ENCODE measurements at regions of chr13 and their contacts with region 1.

Region 1: DNA sequence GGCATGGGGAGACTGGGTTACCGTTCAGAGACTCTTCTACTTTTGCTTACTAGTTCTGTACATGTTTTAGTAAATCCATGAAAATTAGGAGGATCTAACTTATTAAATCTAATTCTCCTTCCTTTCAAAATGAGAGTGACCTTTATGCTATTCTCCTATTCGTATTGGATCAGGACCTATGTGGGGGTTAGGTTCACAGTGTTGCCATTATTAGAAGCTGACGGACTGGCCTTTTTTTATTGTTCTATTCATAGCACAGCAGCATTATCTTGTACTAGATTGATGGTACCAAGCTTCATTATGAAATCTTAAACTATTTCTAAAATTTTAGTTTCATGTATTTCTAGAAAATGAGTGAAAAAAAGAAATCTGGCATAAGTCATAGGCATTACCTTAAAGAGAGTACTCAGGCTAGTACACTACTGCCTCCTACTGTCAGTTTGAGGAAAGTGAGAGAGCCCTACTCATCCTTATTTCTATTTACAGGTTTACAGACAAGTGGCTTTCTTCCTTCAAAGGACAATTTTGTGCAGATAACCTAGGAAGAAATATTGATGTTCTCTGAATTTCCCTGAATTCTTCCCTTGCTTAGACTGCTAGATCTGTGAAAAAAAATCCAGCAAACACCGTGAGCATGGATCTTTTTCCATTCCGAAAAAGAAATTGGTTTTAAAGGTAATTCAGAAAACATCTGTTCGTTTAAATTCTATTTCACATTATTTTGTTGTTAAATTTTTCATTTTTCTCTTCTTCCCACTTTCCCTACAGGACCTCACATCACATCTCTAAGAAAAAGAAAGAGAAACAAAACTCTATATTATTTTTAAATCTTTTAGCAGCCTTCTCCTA is 485.5 kb downstream of the DIAPH3 start:
- DNase-seq: no peak
- H3K4me3 ChIP-seq: no peak overlapping the region
- H3K27ac ChIP-seq: no peak overlapping the region
- H3K4me1 ChIP-seq: no peaks in the 10 kb centered on the region
- H3K27me3 ChIP-seq: no peaks in the 10 kb centered on the region
- CTCF ChIP-seq: peak; percentile 55 to 78 (median 67)
- EP300 ChIP-seq: no peak
- POLR2A ChIP-seq: no peak

Region 2: GRCh38 chr13:59391696-59392095 is 286.5 kb before region 1 on chr13:
- in situ Hi-C with region 1: loop called (anchors 5 to 25 kb)
- intact Hi-C with region 1: loop called (anchors 5 kb)
- DNase-seq: peak; percentile 49
- H3K4me3 ChIP-seq: no peak overlapping the region
- H3K27ac ChIP-seq: no peak overlapping the region
- H3K4me1 ChIP-seq: peaks cover 0 to 5% (median 0%) of the 10 kb centered on the region in 4 donors
- H3K27me3 ChIP-seq: no peaks in the 10 kb centered on the region
- CTCF ChIP-seq: peak; percentile 63 to 80 (median 71)
- EP300 ChIP-seq: no peak
- POLR2A ChIP-seq: no peak

Region 3: GRCh38 chr13:59641817-59642216 is 36.4 kb before region 1 on chr13:
- in situ Hi-C with region 1: no loop called
- intact Hi-C with region 1: no loop called
- DNase-seq: no peak
- H3K4me3 ChIP-seq: no peak overlapping the region
- H3K27ac ChIP-seq: no peak overlapping the region
- H3K4me1 ChIP-seq: no peaks in the 10 kb centered on the region
- H3K27me3 ChIP-seq: no peaks in the 10 kb centered on the region
- CTCF ChIP-seq: no peak
- EP300 ChIP-seq: no peak
- POLR2A ChIP-seq: no peak

Region 4: GRCh38 chr13:59906413-59907049 is 228.3 kb after region 1 on chr13:
- in situ Hi-C with region 1: loop called in 2 of 4 experiments (anchors 10 to 25 kb)
- intact Hi-C with region 1: no loop called
- DNase-seq: no peak
- H3K4me3 ChIP-seq: no peak overlapping the region
- H3K27ac ChIP-seq: no peak overlapping the region
- H3K4me1 ChIP-seq: no peaks in the 10 kb centered on the region
- H3K27me3 ChIP-seq: no peaks in the 10 kb centered on the region
- CTCF ChIP-seq: peak; percentile 42 to 51 (median 47)
- EP300 ChIP-seq: no peak
- POLR2A ChIP-seq: no peak

Region 5: DNA sequence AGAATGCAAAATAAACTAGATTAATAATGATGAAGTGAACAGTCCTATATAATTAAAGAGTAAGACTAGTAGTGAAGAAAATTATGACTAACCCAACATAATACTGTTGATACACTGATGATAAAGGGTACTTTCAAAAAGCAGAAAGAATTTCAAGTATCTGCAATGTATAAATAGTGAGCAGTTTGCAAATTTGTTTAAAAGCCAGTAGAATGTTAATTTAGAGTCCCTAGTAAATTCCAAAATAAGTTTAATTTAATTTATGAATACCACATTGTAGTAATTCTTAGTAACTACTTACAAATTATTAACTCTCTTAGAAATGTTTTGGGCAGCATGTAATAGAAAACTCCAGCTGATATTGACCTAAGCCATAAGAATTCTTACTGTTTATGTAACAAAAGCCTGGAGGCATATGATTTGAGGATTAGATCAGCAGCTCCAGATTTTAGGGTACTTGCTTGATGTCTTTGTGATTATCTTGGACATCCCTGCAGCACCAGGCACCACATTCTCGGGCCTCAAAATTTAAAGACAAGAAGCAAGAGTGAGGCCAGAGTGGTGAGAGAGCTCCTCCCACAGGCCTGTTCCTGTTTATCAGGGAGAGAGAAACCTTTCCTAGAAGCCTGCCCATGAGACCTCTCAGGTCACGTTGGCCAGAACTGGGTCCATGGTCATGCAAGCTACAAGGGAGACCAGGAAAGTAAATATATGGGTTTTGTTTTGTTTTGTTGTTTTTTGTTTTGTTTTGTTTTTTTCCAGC is 651.2 kb after region 1 on chr13:
- in situ Hi-C with region 1: loop called in 2 of 4 experiments (anchors 10 to 25 kb)
- intact Hi-C with region 1: no loop called
- DNase-seq: peak; percentile 48
- H3K4me3 ChIP-seq: no peak overlapping the region
- H3K27ac ChIP-seq: no peak overlapping the region
- H3K4me1 ChIP-seq: peaks cover 0 to 17% (median 6%) of the 10 kb centered on the region in 4 donors
- H3K27me3 ChIP-seq: no peaks in the 10 kb centered on the region
- CTCF ChIP-seq: peak in 3 of 5 experiments; percentile 18 to 32 (median 22)
- EP300 ChIP-seq: no peak
- POLR2A ChIP-seq: no peak

Region 6: GRCh38 chr13:60335531-60335930 is 657.3 kb after region 1 on chr13:
- in situ Hi-C with region 1: loop called in 2 of 4 experiments (anchors 10 to 25 kb)
- intact Hi-C with region 1: no loop called
- DNase-seq: no peak
- H3K4me3 ChIP-seq: no peak overlapping the region
- H3K27ac ChIP-seq: no peak overlapping the region
- H3K4me1 ChIP-seq: peaks cover 0 to 11% (median 0%) of the 10 kb centered on the region in 4 donors
- H3K27me3 ChIP-seq: no peaks in the 10 kb centered on the region
- CTCF ChIP-seq: peak; percentile 46 to 61 (median 51)
- EP300 ChIP-seq: no peak
- POLR2A ChIP-seq: no peak

Region 7: DNA sequence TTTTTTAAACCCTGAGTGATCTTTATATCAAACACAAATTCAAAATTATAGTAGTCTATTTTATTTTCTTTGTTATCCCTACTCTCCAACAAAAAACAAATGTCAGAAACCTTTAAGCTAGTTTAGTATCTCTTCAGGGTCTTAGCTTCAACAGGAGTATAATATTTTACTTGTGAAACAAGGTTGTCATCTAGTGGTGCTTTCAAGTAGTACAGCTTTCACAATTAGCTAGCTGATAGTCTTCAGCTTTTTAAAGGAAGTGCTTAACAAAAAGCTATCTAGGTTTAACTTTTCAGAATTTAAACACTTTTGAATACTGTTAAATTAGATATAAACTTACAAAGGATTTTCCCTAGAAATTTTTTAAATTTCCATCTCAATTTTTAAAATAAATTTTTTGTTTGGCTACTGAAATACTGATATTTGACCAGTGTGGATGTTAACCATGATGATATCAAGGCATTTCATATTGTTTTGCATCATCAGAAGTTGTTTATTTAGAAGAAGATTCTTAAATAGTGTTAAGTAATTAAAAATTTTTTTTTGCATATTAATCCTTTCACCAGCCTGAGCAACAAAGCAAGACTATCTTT is 753.0 kb after region 1 on chr13:
- in situ Hi-C with region 1: loop called in 2 of 4 experiments (anchors 25 kb)
- intact Hi-C with region 1: no loop called
- DNase-seq: no peak
- H3K4me3 ChIP-seq: no peak overlapping the region
- H3K27ac ChIP-seq: no peak overlapping the region
- H3K4me1 ChIP-seq: peaks cover 0 to 15% (median 8%) of the 10 kb centered on the region in 4 donors
- H3K27me3 ChIP-seq: no peaks in the 10 kb centered on the region
- CTCF ChIP-seq: peak; percentile 89 to 97 (median 94)
- EP300 ChIP-seq: no peak
- POLR2A ChIP-seq: no peak

Measured in transverse colon (tissue), 4 donors.